Activated CD4-positive, alpha-beta T cell treated with anti-CD3 and anti-CD28 coated beads for 36 hours (primary cell): ENCODE measurements at regions of chrX and their contacts with region 1.

Region 1: DNA sequence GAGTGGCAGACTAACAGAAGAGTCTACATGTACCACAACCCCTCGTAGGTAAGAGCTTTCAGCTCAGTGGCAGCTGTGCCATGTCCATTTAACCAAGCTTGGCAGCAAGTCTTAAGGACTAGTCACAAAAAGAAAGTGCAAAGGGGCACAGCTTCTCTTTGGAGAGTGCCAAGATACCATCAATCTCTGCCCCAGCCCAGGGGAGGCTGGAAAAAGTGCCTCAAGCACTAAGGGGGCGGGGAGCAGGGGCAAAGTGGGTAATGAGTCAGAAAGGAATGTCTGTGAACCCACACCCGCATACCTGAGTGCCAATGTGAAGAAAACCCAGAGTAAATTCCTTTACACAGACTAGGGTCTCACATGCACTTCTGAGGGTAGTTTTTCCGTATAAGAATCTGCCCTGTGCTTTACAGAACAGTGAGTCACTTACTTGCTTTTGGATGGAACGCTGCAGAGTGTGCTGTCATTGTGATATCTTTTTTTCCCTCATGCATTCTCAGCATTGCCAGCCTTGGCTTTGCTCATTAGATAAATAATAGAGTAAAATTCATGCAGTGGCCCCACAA is 219.8 kb downstream of the ZNF674 start:
- DNase-seq: peak; percentile 78
- ATAC-seq: peak; percentile 83
- H3K4me3 Mint-ChIP-seq: peak overlapping the region; percentile 3
- H3K27ac Mint-ChIP-seq: peak overlapping the region; percentile 76
- H3K4me1 Mint-ChIP-seq: peaks cover 62% of the 10 kb centered on the region
- H3K27me3 Mint-ChIP-seq: no peaks in the 10 kb centered on the region

Region 2: DNA sequence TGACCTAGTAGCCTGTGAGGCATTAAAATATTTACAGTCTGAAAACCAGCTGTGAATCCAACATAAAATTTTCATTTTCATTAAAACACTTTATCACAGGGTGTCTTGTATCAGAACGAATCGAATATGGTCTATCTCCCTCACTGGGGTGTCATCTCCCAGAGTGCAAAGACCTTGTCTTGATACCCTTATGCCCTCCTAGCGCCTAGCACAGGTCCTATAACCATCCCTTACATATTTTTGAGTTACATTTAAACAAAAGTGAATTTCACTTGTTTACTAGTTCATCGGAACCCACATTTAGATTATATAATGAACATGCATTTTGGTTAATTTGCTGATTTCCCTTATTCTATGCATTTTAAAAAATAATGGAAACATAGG is 1138.8 kb before region 1 on chrX:
- CTCF ChIA-PET with region 1: no interaction called
- POLR2A ChIA-PET with region 1: no interaction called
- intact Hi-C with region 1: loop called in 1 of 2 experiments (anchors 10 kb)
- DNase-seq: no peak
- ATAC-seq: no peak
- H3K4me3 Mint-ChIP-seq: peak overlapping the region; percentile 70
- H3K27ac Mint-ChIP-seq: peak overlapping the region; percentile 72
- H3K4me1 Mint-ChIP-seq: peaks cover 31% of the 10 kb centered on the region
- H3K27me3 Mint-ChIP-seq: no peaks in the 10 kb centered on the region

Region 3: DNA sequence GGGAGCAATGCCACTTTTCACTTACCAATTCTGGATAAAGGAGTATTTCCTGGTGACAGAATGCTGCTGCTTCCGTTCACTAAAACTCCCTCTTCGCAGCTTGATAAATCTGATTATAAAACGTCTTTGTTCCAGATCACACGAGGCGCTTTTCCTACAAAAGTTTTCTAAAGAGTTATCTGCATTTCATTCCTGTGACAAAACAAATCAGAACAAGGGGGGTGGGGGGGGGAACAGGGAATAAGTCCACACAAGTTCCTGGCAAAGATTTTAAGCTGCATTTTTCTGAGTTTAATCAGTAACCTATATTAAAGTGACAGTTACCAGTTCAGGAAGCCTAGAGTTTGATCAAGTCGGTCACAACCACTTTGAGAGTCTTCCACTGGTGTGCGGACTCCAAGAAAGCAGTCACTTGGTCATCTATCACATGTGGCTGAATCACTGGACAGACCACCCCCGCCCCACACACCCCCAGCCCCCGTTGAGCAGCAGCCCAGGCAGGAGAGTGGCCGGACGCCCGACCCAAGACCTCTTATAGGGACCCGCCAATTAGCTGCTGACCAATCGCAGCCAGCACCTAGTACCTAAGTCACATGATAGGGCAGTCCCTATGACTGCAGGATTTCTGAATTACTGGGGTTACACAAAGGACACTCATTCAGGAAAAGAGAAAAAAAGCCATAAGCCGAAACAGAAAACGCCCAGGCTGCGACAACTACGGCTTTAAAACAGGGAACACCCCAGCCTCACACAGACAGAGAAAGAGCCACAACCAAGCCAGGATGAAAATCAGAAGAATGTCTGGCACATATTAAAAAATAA is 555.4 kb before region 1 on chrX:
- CTCF ChIA-PET with region 1: no interaction called
- POLR2A ChIA-PET with region 1: no interaction called
- intact Hi-C with region 1: loop called in 1 of 2 experiments (anchors 5 kb)
- DNase-seq: peak; percentile 60
- ATAC-seq: peak; percentile 63
- H3K4me3 Mint-ChIP-seq: peak overlapping the region; percentile 77
- H3K27ac Mint-ChIP-seq: peak overlapping the region; percentile 98
- H3K4me1 Mint-ChIP-seq: peaks cover 53% of the 10 kb centered on the region
- H3K27me3 Mint-ChIP-seq: no peaks in the 10 kb centered on the region

Region 4: GRCh38 chrX:45806410-45807121 is 518.8 kb before region 1 on chrX:
- CTCF ChIA-PET with region 1: no interaction called
- POLR2A ChIA-PET with region 1: no interaction called
- intact Hi-C with region 1: loop called in 1 of 2 experiments (anchors 5 kb)
- DNase-seq: peak; percentile 65
- ATAC-seq: peak; percentile 52
- H3K4me3 Mint-ChIP-seq: peak overlapping the region; percentile 68
- H3K27ac Mint-ChIP-seq: peak overlapping the region; percentile 88
- H3K4me1 Mint-ChIP-seq: peaks cover 85% of the 10 kb centered on the region
- H3K27me3 Mint-ChIP-seq: no peaks in the 10 kb centered on the region

Region 5: GRCh38 chrX:46279925-46280313 is 45.5 kb before region 1 on chrX:
- CTCF ChIA-PET with region 1: no interaction called
- POLR2A ChIA-PET with region 1: no interaction called
- intact Hi-C with region 1: loop called (anchors 2 to 5 kb)
- DNase-seq: no peak
- ATAC-seq: peak; percentile 60
- H3K4me3 Mint-ChIP-seq: no peak overlapping the region
- H3K27ac Mint-ChIP-seq: no peak overlapping the region
- H3K4me1 Mint-ChIP-seq: peaks cover 26% of the 10 kb centered on the region
- H3K27me3 Mint-ChIP-seq: no peaks in the 10 kb centered on the region

Region 6: DNA sequence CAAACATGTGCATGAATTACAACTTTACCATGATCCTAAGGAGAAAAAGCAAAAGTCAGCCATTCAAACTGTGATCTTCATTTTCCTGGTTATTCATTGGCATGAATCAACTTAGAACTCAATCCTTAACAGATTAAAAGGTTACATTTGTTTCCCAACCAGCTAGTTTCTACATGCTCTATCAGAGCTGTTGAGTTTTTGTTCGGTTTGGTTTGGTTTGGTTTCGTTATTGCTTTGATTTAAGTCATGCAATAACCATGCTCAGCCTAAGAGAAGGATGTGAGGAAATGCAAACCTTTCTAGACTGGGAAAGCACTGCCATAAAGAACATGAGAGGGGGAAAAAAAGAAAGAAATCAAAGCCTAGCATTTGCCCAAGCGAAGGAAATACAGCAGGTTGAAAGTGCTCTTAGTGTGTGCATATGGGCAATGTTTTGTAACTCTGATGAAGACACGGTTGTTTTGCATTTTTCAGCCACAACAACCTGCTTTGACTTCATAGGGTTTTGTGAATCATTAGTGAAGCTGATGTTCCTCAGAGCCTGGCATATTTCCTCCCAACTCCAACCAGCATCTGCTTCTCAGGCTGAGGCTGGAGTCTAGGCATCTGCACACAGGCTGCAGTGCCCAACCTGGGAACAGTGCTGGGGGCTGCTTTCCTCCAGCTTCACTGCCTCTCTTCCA is 14.4 kb before region 1 on chrX:
- CTCF ChIA-PET with region 1: no interaction called
- POLR2A ChIA-PET with region 1: no interaction called
- intact Hi-C with region 1: loop called in 1 of 2 experiments (anchors 1 kb)
- DNase-seq: no peak
- ATAC-seq: peak; percentile 84
- H3K4me3 Mint-ChIP-seq: no peak overlapping the region
- H3K27ac Mint-ChIP-seq: peak overlapping the region; percentile 62
- H3K4me1 Mint-ChIP-seq: peaks cover 16% of the 10 kb centered on the region
- H3K27me3 Mint-ChIP-seq: no peaks in the 10 kb centered on the region

Region 7: DNA sequence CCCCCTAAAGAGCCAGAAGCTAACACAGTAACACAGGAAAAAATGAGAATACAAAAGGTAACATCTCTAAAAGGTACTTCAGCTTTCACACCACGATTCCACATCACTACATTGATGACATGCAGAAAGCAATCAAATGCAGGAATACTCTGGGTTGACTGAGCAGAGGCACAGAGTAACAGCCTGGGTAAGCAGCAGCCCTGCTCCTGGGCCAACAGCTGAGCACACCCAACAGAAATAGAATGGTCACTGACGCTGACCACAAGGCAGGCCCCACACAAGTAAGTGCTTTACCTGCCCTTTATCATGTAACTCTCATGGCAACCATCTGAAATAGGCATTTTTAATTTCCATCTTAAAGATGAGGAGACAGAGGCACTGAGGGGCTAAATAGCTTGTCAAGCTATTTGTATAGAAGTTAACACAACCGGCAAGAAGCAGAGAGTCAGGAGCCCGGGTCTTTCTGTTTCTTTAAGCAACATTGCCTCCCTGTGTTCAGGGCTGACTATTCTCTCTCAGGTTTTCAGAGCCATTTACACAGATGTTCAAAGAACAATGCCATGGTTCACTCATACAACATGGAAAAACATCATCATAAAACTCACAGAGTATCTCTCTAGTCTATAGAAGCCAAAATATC is 51.0 kb after region 1 on chrX:
- CTCF ChIA-PET with region 1: interaction called, 3 read pairs
- POLR2A ChIA-PET with region 1: no interaction called
- intact Hi-C with region 1: loop called (anchors 2 to 5 kb)
- DNase-seq: peak; percentile 52
- ATAC-seq: peak; percentile 97
- H3K4me3 Mint-ChIP-seq: no peak overlapping the region
- H3K27ac Mint-ChIP-seq: no peak overlapping the region
- H3K4me1 Mint-ChIP-seq: peaks cover 18% of the 10 kb centered on the region
- H3K27me3 Mint-ChIP-seq: no peaks in the 10 kb centered on the region